Cardiac septum (tissue), 1 donor: ENCODE measurements at regions of chr10 and their contacts with region 1.

Region 1: GRCh38 chr10:93680412-93681047 is 21.9 kb downstream of the FRA10AC1 start:
- DNase-seq: no peak

Region 2: GRCh38 chr10:93554760-93555432 is 125.6 kb before region 1 on chr10:
- intact Hi-C with region 1: loop called (anchors 2 kb)
- DNase-seq: peak; percentile 86